ENCODE measurements at regions of chr18 and their contacts with region 1.

Region 1: GRCh38 chr18:45715341-45715740 is 8.6 kb upstream of the SLC14A1 start:
- DNase-seq: no peak
- ATAC-seq: no peak
- H3K4me3 ChIP-seq: no peak overlapping the region
- H3K27ac ChIP-seq: no peak overlapping the region
- H3K4me1 ChIP-seq: no peaks in the 10 kb centered on the region
- H3K27me3 ChIP-seq: peaks cover 0 to 3% (median 0%) of the 10 kb centered on the region in 7 donors
- CTCF ChIP-seq: no peak

Region 2: GRCh38 chr18:45670281-45670962 is 44.9 kb before region 1 on chr18:
- intact Hi-C with region 1: no loop called
- DNase-seq: peak in 1 of 2 donors; percentile 17
- ATAC-seq: peak in 6 of 8 donors; percentile 50 to 77 (median 65)
- H3K4me3 ChIP-seq: peak overlapping the region in 1 of 10 donors; percentile 32
- H3K27ac ChIP-seq: peak overlapping the region in 1 of 10 donors; percentile 58
- H3K4me1 ChIP-seq: peaks cover 0 to 45% (median 19%) of the 10 kb centered on the region in 9 donors
- H3K27me3 ChIP-seq: no peaks in the 10 kb centered on the region
- CTCF ChIP-seq: no peak

Region 3: DNA sequence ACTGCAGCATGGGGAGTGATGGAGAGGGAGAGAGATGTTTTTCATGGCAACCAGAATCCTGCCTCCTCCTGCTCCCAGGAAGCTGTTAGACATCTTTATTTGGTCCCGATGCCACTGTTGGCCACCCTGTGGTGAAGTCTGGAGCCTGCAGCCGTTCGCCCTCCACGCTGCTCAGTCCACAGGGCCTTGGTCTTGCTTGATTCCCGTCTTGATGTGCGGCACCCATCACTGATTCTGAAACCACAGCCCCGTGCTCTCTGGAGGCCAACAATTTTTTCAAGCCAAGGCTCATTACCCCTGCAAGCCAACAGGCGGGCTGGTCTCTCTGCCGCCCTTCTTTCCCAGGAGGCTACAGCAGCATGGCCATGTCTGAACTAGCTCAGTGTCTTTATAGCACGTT is 134.7 kb after region 1 on chr18:
- intact Hi-C with region 1: loop called in 2 of 10 experiments (anchors 10 kb)
- DNase-seq: no peak
- ATAC-seq: no peak
- H3K4me3 ChIP-seq: no peak overlapping the region
- H3K27ac ChIP-seq: no peak overlapping the region
- H3K4me1 ChIP-seq: peaks cover 0 to 13% (median 3%) of the 10 kb centered on the region in 9 donors
- H3K27me3 ChIP-seq: no peaks in the 10 kb centered on the region
- CTCF ChIP-seq: peak in 3 of 9 donors; percentile 10 to 26 (median 22)